ENCODE measurements at regions of chr13 and their contacts with region 1.

Region 1: GRCh38 chr13:27012482-27013197 is 159.0 kb downstream of the USP12 start:
- DNase-seq: no peak
- H3K4me3 ChIP-seq: no peak overlapping the region
- H3K27ac ChIP-seq: no peak overlapping the region
- H3K4me1 ChIP-seq: peaks cover 5% of the 10 kb centered on the region
- H3K27me3 ChIP-seq: no peaks in the 10 kb centered on the region
- CTCF ChIP-seq: no peak

Region 2: DNA sequence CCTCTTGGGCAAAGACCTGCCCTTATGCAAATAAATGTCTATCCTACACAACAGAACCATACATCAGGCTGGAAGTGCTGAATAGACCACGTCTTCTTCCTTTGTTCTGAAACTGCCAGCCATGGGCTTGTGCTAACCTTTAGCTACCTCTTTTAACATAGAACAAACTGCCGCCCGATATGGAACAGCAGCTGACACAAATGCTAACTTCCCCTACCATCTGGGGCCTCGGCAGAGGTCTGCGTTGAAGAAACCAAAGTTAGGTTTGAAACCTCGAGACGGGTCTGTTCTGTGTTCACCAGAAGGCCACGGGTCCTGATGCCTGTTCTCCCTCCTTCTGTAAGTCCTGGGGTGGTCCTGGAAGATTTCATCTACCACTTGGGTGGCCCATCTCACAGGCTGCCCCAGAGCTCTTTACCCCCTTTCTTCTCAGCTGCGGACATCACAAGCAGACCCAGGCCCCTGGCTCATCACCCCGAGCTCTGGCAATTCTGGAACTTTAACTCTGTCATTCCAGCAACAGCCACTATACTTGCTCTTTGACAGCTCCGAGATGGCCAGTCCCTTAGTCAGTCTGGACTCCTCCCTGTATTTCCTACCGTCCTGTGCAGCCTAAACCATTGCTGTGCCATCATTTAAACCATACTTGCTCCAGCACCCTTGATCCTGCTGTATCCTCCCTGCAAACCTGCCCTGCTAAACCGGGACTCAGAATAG is 12.3 kb after region 1 on chr13:
- intact Hi-C with region 1: no loop called
- DNase-seq: no peak
- H3K4me3 ChIP-seq: no peak overlapping the region
- H3K27ac ChIP-seq: no peak overlapping the region
- H3K4me1 ChIP-seq: no peaks in the 10 kb centered on the region
- H3K27me3 ChIP-seq: no peaks in the 10 kb centered on the region
- CTCF ChIP-seq: no peak

Region 3: DNA sequence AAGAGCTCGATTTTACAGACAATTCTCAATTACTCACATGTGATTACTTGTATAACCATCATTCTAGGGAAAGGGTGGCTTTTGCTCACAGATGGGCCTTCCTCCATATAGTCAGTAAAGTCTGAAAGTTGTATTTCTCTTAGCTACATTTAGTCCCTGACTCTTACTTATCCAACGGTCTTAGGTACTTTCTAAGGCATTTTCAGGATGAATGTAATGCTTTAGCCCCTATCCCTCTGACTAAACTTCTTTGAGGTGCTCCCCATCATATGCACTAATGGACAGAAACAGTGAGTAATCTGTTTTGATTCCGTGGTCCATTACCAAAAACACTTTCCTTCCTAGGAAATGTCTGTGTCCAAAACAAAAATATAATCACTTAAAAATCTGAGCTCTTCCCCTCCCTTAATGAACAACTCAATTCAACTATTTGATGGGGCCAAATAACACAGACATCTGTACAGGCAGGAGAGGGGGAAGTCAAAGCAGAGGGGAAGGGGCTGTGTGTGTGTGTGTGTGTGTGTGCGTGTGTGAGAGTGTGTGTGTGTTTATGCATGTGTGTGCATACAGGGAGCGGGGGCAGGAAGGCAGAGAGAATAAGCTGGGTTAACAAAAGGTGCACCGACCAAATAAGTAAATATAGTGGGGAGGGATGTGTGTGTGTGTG is 74.1 kb after region 1 on chr13:
- intact Hi-C with region 1: loop called (anchors 5 kb)
- DNase-seq: no peak
- H3K4me3 ChIP-seq: no peak overlapping the region
- H3K27ac ChIP-seq: no peak overlapping the region
- H3K4me1 ChIP-seq: no peaks in the 10 kb centered on the region
- H3K27me3 ChIP-seq: no peaks in the 10 kb centered on the region
- CTCF ChIP-seq: no peak

Region 4: DNA sequence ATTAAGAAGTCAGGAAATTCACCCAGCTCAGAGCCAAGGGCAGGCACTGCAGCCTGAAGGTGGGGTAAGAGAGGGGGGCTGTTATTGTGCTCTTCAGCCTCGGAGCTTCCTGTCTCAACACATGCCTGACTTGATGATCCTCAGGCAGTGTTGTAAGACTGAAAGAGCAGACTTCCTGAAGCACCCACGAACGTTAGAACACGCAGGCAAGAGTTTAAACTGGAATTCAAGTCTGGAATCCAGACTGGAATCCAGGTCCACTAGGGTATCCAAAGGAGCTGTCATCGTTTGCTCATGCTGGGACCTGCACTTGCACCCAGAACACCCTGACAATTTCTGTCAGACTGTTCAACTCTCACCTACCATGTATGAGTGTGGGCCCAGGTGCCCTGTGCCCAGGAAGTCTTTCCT is 1493.0 kb after region 1 on chr13:
- intact Hi-C with region 1: no loop called
- DNase-seq: no peak
- H3K4me3 ChIP-seq: no peak overlapping the region
- H3K27ac ChIP-seq: no peak overlapping the region
- H3K4me1 ChIP-seq: no peaks in the 10 kb centered on the region
- H3K27me3 ChIP-seq: no peaks in the 10 kb centered on the region
- CTCF ChIP-seq: no peak